ENCODE measurements at regions of chr9 and their contacts with region 1.

Region 1: DNA sequence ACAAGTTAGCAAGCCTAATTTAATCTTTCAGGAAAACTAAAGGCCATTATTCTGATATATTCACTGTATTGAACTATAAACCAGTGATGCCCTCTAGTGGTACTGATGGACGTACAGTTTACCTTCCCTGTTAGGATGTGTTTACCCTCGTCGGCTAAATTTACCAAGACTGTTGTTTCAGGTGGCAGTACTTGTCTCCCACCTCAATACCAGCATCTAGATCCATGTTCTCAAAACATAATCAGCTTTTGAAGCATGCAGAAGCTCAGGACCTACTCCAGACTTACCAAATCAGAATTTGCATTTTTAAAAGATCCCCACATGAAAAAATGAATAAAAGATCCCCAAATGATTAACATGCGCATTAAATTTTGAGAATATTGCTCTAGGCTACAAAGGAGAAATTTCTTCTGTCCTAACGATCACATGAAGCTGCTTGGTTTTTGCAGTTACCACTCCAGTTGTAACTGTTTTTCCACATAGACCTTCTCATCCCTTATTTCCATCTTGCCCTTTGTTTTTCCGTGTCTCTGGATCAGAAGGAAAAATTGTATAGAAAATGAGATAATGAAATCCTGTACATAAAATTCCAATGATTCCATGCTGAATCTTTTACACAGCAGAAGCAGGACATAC is 3.2 kb upstream of the BAAT start:
- H3K4me3 ChIP-seq: no peak overlapping the region
- H3K27ac ChIP-seq: 0 out of 2 replicates have a peak overlapping the region, but pooled peaks have one; percentile 5
- H3K4me1 ChIP-seq: no peaks in the 10 kb centered on the region
- CTCF ChIP-seq: no peak

Region 2: GRCh38 chr9:101235105-101235866 is 152.7 kb before region 1 on chr9:
- CTCF ChIA-PET with region 1: no interaction called
- POLR2A ChIA-PET with region 1: no interaction called
- H3K4me3 ChIP-seq: no peak overlapping the region
- H3K27ac ChIP-seq: no peak overlapping the region
- H3K4me1 ChIP-seq: no peaks in the 10 kb centered on the region
- CTCF ChIP-seq: no peak

Region 3: DNA sequence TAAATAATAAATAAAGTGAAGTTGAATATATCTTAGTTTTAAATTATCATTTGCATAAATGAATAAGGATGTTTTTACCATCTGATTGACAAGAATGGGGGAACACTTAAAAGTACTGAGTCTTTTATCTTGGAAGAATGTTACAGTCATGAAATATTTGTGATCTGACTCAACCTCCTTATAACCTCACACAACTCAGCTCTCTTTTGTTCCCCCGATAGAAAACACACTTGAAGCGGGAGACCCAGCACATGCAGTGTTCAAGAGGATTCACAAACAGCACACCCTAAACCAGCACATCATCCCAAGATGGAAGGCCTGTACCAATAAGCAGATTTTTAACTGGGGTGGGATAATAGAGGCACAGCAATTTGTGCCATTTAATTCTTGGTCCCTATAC is 18.7 kb before region 1 on chr9:
- CTCF ChIA-PET with region 1: interaction called, 38 read pairs
- POLR2A ChIA-PET with region 1: no interaction called
- H3K4me3 ChIP-seq: no peak overlapping the region
- H3K27ac ChIP-seq: no peak overlapping the region
- H3K4me1 ChIP-seq: no peaks in the 10 kb centered on the region
- CTCF ChIP-seq: no peak

Region 4: GRCh38 chr9:101376111-101376848 is 11.7 kb before region 1 on chr9:
- CTCF ChIA-PET with region 1: interaction called, 38 read pairs
- POLR2A ChIA-PET with region 1: no interaction called
- H3K4me3 ChIP-seq: no peak overlapping the region
- H3K27ac ChIP-seq: no peak overlapping the region
- H3K4me1 ChIP-seq: no peaks in the 10 kb centered on the region
- CTCF ChIP-seq: no peak

Region 5: GRCh38 chr9:101398068-101398929 is 10.3 kb after region 1 on chr9 and contains the starts of genes MRPL50 and ZNF189:
- CTCF ChIA-PET with region 1: interaction called, 16 read pairs
- POLR2A ChIA-PET with region 1: interaction called, 17 read pairs
- H3K4me3 ChIP-seq: peak within 1 kb of the TSS; percentile 84
- H3K27ac ChIP-seq: peak within 1 kb of the TSS; percentile 59; the same call in 1 of the 2 replicates
- H3K4me1 ChIP-seq: no peaks in the 10 kb centered on the region
- CTCF ChIP-seq: no peak